Activated B cell treated with CpG ODN at 0.5 μM for 24 hours (primary cell): ENCODE measurements at regions of chr13 and their contacts with region 1.

Region 1: DNA sequence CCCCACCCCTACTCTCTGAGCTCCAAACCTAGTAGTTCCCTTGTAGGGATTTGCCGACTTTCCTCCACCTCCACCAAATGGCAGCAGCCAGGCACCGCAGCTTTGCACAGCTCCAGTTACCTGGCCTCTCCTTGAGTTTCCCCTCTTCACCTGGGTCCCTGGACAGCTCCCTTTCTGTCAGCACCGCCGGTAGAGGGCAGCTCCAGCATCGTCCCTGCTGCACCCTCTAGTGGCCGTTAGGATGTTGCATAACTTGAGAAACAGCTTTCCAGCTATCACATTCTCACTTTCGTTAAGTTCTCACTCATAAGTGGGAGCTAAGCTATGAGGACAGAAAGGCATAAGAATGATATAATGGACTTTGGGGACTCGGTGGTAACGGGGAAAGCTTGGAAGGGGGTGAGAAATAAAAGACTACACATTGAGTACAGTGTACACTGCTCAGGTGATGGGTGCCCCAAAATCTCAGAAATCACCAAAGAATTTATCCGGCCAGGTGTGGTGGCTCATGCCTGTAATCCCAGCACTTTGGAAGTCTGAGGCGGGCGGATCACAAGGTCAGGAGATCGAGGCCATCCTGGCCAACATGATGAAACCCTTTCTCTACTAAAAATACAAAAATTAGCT is 60.4 kb upstream of the OLFM4 start:
- DNase-seq: peak; percentile 39
- ATAC-seq: peak; percentile 75
- H3K4me3 Mint-ChIP-seq: no peak overlapping the region
- H3K27ac Mint-ChIP-seq: no peak overlapping the region
- H3K4me1 Mint-ChIP-seq: no peaks in the 10 kb centered on the region
- H3K27me3 Mint-ChIP-seq: peaks cover 7% of the 10 kb centered on the region
- CTCF ChIP-seq: no peak

Region 2: DNA sequence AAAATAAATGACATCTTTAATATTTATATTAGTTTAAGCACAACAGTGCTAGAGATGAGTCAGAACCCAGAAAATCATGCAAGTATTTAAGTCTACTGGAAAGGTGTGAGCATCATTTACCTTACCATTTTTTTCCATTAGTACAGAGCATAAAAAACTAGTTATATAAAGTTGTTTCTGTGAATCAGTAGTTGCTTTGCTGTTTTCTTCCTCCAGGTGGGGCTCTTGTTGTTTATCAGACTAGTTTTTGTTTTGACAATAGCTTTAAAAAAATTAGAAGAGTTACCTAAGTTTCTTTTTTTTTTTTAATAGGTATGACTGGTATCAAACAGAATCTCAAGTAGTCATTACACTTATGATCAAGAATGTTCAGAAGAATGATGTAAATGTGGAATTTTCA is 302.9 kb before region 1 on chr13:
- CTCF ChIA-PET with region 1: interaction called, 7 read pairs
- POLR2A ChIA-PET with region 1: no interaction called
- intact Hi-C with region 1: loop called (anchors 2 kb)
- DNase-seq: no peak
- ATAC-seq: no peak
- H3K4me3 Mint-ChIP-seq: no peak overlapping the region
- H3K27ac Mint-ChIP-seq: no peak overlapping the region
- H3K4me1 Mint-ChIP-seq: no peaks in the 10 kb centered on the region
- H3K27me3 Mint-ChIP-seq: no peaks in the 10 kb centered on the region
- CTCF ChIP-seq: no peak

Region 3: GRCh38 chr13:52862358-52863206 is 105.6 kb before region 1 on chr13:
- CTCF ChIA-PET with region 1: interaction called, 13 read pairs
- POLR2A ChIA-PET with region 1: no interaction called
- intact Hi-C with region 1: loop called (anchors 1 kb)
- DNase-seq: no peak
- ATAC-seq: no peak
- H3K4me3 Mint-ChIP-seq: no peak overlapping the region
- H3K27ac Mint-ChIP-seq: no peak overlapping the region
- H3K4me1 Mint-ChIP-seq: no peaks in the 10 kb centered on the region
- H3K27me3 Mint-ChIP-seq: peaks cover 3% of the 10 kb centered on the region
- CTCF ChIP-seq: no peak

Region 4: GRCh38 chr13:52896827-52897659 is 71.1 kb before region 1 on chr13:
- CTCF ChIA-PET with region 1: interaction called, 11 read pairs
- POLR2A ChIA-PET with region 1: no interaction called
- intact Hi-C with region 1: loop called (anchors 1 kb)
- DNase-seq: no peak
- ATAC-seq: no peak
- H3K4me3 Mint-ChIP-seq: no peak overlapping the region
- H3K27ac Mint-ChIP-seq: no peak overlapping the region
- H3K4me1 Mint-ChIP-seq: no peaks in the 10 kb centered on the region
- H3K27me3 Mint-ChIP-seq: no peaks in the 10 kb centered on the region
- CTCF ChIP-seq: no peak

Region 5: DNA sequence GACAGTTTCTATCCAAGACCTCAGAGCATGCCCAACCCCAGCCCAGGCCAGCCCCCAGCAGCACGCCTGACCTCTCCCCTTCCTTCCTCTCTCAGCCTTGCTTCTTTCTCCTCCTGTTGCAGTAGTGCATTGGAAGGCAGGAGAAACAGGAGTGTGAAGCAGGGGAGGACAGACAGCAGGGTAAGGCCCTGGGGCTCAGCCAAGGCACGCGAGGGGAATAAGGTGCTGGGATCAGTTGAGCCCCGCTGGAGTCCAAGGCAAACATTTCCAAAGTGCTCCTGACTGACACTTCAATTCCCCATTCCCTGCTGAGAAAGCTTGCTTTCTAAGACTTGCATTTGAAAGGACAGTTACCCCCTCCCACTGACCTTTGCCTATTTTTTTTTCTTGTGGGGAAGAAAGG is 12.7 kb before region 1 on chr13:
- CTCF ChIA-PET with region 1: interaction called, 15 read pairs
- POLR2A ChIA-PET with region 1: no interaction called
- intact Hi-C with region 1: no loop called
- DNase-seq: no peak
- ATAC-seq: no peak
- H3K4me3 Mint-ChIP-seq: no peak overlapping the region
- H3K27ac Mint-ChIP-seq: no peak overlapping the region
- H3K4me1 Mint-ChIP-seq: no peaks in the 10 kb centered on the region
- H3K27me3 Mint-ChIP-seq: no peaks in the 10 kb centered on the region
- CTCF ChIP-seq: no peak

Region 6: GRCh38 chr13:53090461-53090860 is 122.3 kb after region 1 on chr13:
- CTCF ChIA-PET with region 1: no interaction called
- POLR2A ChIA-PET with region 1: no interaction called
- intact Hi-C with region 1: no loop called
- DNase-seq: no peak
- ATAC-seq: no peak
- H3K4me3 Mint-ChIP-seq: no peak overlapping the region
- H3K27ac Mint-ChIP-seq: no peak overlapping the region
- H3K4me1 Mint-ChIP-seq: no peaks in the 10 kb centered on the region
- H3K27me3 Mint-ChIP-seq: no peaks in the 10 kb centered on the region
- CTCF ChIP-seq: no peak

Region 7: GRCh38 chr13:53848366-53848961 is 880.3 kb after region 1 on chr13:
- CTCF ChIA-PET with region 1: no interaction called
- POLR2A ChIA-PET with region 1: no interaction called
- intact Hi-C with region 1: no loop called
- DNase-seq: no peak
- ATAC-seq: no peak
- H3K4me3 Mint-ChIP-seq: no peak overlapping the region
- H3K27ac Mint-ChIP-seq: no peak overlapping the region
- H3K4me1 Mint-ChIP-seq: no peaks in the 10 kb centered on the region
- H3K27me3 Mint-ChIP-seq: no peaks in the 10 kb centered on the region
- CTCF ChIP-seq: no peak